CD4-positive, alpha-beta memory T cell (primary cell): ENCODE measurements at regions of chr7 and their contacts with region 1.

Region 1: GRCh38 chr7:73606801-73607691 is 17.3 kb downstream of the MLXIPL start:
- DNase-seq: peak; percentile 56 to 62 (median 59)
- H3K4me3 ChIP-seq: no peak overlapping the region
- H3K4me3 Mint-ChIP-seq: no peak overlapping the region
- H3K27ac ChIP-seq: no peak overlapping the region
- H3K27ac Mint-ChIP-seq: peak overlapping the region in 1 of 7 donors; percentile 19
- H3K4me1 ChIP-seq: peaks cover 6% of the 10 kb centered on the region
- H3K4me1 Mint-ChIP-seq: no peaks in the 10 kb centered on the region
- H3K27me3 ChIP-seq: no peaks in the 10 kb centered on the region
- H3K27me3 Mint-ChIP-seq: peaks cover 0 to 14% of the 10 kb centered on the region in 2 donors

Region 2: GRCh38 chr7:73585196-73585595 is 21.9 kb before region 1 on chr7:
- CTCF ChIA-PET with region 1: interaction called, 14 read pairs
- POLR2A ChIA-PET with region 1: no interaction called
- intact Hi-C with region 1: no loop called
- DNase-seq: no peak
- H3K4me3 ChIP-seq: no peak overlapping the region
- H3K4me3 Mint-ChIP-seq: no peak overlapping the region
- H3K27ac ChIP-seq: no peak overlapping the region
- H3K27ac Mint-ChIP-seq: no peak overlapping the region
- H3K4me1 ChIP-seq: no peaks in the 10 kb centered on the region
- H3K4me1 Mint-ChIP-seq: peaks cover 7 to 12% (median 10%) of the 10 kb centered on the region in 4 donors
- H3K27me3 ChIP-seq: no peaks in the 10 kb centered on the region
- H3K27me3 Mint-ChIP-seq: no peaks in the 10 kb centered on the region

Region 3: DNA sequence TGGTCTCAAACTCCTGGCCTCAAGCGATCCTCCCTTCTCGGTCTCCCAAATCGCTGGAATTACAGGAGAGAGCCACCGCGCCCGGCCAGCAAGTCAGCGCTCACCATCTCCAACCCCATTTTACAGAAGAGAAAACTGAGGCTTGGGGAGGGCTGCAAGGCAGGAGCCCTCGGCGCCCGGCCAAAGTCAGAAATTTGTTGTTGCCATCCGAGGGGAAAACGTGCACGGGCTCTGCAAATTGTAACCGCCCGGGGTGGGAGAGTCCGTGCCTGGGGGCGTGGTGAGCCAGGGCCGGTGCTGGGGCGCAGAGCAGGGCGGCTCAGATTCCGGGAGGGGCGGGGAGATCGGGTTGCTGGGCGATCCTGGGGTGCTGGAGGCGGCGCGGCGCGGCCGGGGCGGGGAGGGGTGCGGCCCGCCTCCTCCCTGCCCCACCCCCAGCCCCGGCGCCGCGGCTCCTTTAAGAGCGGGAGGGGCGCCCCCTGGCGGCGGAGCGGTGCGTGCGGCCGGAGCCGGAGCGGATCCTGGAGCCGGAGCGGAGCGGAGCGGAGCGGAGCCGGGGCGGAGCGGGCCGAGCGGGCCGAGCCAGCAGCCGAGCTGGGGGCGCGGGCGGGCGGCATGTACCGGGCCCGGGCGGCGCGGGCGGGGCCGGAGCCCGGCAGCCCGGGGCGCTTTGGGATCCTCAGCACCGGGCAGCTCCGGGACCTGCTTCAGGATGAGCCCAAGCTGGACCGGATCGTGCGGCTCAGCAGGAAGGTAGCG is 60.5 kb after region 1 on chr7 and contains the start of gene VPS37D:
- CTCF ChIA-PET with region 1: interaction called, 19 read pairs
- POLR2A ChIA-PET with region 1: interaction called, 3 read pairs
- intact Hi-C with region 1: loop called (anchors 1 kb)
- DNase-seq: peak; percentile 87 to 96 (median 91)
- H3K4me3 ChIP-seq: peak within 1 kb of the TSS in 1 of 2 donors; percentile 44
- H3K4me3 Mint-ChIP-seq: peak within 1 kb of the TSS; percentile 70 to 81 (median 76)
- H3K27ac ChIP-seq: no peak within 1 kb of the TSS
- H3K27ac Mint-ChIP-seq: peak within 1 kb of the TSS in 6 of 7 donors; percentile 48 to 70 (median 54)
- H3K4me1 ChIP-seq: peaks cover 10% of the 10 kb centered on the region
- H3K4me1 Mint-ChIP-seq: peaks cover 4 to 12% (median 7%) of the 10 kb centered on the region in 4 donors
- H3K27me3 ChIP-seq: peaks cover 13% of the 10 kb centered on the region
- H3K27me3 Mint-ChIP-seq: peaks cover 19 to 31% of the 10 kb centered on the region in 2 donors
- total RNA-seq, gene VPS37D: not detected

Region 4: DNA sequence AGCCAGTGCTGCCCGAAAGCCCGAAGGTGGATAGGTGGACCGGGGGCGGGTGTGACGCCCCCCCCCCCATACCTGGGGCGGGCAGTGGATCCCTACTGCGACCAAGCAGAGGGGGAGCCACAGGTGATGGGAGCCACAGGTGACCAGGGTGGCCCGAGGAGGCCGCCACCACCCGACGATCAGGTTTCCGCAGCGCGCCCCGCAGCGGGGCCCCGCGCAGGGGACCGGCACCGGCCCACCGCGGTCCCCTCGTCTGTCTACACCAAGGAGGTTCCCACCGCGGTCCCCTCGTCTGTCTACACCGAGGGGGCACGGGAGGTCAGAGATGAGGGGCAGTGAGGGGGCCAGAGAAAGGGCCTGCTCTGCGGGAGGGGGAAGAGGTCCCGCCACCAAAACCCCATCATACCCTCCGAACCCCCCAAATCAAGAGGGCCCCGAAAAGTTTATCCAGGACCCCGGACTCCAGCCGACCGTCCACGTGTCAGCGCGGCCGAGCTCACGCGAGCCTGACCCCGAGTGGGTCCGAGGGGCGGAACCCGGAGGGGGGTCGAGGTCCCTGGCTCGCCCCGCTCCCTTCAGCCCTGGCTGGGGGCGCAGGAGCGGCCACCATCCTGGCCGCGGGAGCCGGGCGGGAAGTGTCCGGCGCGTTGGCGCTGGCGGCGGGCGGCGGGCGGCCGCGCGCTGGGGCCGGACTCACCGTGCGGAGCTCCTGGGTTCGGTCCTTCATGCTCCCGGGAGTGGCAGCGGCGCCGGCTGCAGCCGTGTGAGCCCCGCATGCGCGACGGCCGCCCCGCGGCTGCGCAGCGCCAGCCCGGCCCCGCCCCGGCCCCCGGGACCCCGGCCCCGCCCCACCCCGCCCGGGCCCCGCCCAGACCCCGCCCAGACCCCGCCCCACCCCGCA is 112.1 kb after region 1 on chr7 and contains the start of gene STX1A:
- CTCF ChIA-PET with region 1: interaction called, 111 read pairs
- POLR2A ChIA-PET with region 1: no interaction called
- intact Hi-C with region 1: no loop called
- DNase-seq: peak; percentile 65 to 78 (median 71)
- H3K4me3 ChIP-seq: peak within 1 kb of the TSS; percentile 65 to 76
- H3K4me3 Mint-ChIP-seq: peak within 1 kb of the TSS; percentile 84 to 92 (median 91)
- H3K27ac ChIP-seq: peak within 1 kb of the TSS; percentile 46
- H3K27ac Mint-ChIP-seq: peak within 1 kb of the TSS in 5 of 7 donors; percentile 68 to 90 (median 72)
- H3K4me1 ChIP-seq: peaks cover 34% of the 10 kb centered on the region
- H3K4me1 Mint-ChIP-seq: peaks cover 13 to 29% (median 20%) of the 10 kb centered on the region in 4 donors
- H3K27me3 ChIP-seq: no peaks in the 10 kb centered on the region
- H3K27me3 Mint-ChIP-seq: no peaks in the 10 kb centered on the region
- total RNA-seq, gene STX1A: 7.5 to 8.3 TPM

Region 5: DNA sequence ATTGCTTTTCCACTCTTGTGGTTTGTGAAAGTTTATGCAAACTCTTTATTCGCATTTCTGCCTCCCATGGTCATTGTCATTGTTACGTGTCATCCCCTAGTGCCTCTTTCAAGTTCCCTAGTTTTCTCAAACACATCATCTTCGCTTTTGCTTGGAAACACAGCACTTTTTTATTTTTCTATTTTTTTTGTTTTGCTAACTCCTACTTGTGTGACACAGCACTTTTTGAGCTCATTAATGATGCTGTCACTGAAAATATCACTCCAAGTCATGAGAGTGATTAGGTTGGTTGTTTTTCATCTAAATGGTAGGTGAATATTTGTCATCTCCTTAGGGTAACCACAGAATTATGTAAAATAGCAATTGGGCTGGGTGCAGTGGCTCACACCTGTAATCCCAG is 120.9 kb after region 1 on chr7:
- CTCF ChIA-PET with region 1: interaction called, 142 read pairs
- POLR2A ChIA-PET with region 1: interaction called, 9 read pairs
- intact Hi-C with region 1: no loop called
- DNase-seq: no peak
- H3K4me3 ChIP-seq: no peak overlapping the region
- H3K4me3 Mint-ChIP-seq: no peak overlapping the region
- H3K27ac ChIP-seq: no peak overlapping the region
- H3K27ac Mint-ChIP-seq: peak overlapping the region in 1 of 7 donors; percentile 37
- H3K4me1 ChIP-seq: no peaks in the 10 kb centered on the region
- H3K4me1 Mint-ChIP-seq: peaks cover 0 to 2% (median 0%) of the 10 kb centered on the region in 4 donors
- H3K27me3 ChIP-seq: no peaks in the 10 kb centered on the region
- H3K27me3 Mint-ChIP-seq: peaks cover 8 to 10% of the 10 kb centered on the region in 2 donors